Heart right ventricle (tissue), 16 donors: ENCODE measurements at regions of chr18 and their contacts with region 1.

Region 1: DNA sequence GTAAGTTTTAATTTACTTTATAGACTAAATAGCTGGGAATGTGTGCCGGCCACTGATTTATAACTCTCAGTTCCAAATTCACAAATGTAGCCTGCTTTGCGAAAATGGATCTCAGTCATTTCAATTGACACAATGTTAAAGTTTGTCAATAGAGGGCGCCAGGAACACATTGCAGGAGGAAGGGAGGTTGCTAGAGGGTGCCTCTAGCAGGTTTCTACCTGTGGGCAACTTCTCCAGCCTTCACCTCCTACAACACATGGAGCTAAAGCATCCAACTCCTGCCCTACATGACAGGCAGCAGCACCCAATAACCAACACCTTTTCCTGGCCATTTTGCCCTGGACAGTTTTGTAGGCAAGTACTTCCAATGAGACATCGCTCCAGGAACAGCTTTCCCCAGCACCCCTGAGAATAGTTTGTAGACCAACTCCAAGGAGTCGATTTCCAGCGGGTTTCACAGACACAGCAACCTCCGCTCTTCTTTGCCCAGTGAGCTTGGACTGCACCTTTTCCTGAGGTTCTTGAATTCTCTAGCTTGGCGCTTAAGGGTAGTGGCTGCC is 784.8 kb upstream of the CDH2 start:
- DNase-seq: peak in 1 of 2 donors; percentile 5
- ATAC-seq: no peak
- H3K4me3 ChIP-seq: no peak overlapping the region
- H3K27ac ChIP-seq: no peak overlapping the region
- H3K4me1 ChIP-seq: no peaks in the 10 kb centered on the region
- H3K27me3 ChIP-seq: no peaks in the 10 kb centered on the region
- CTCF ChIP-seq: peak; percentile 12 to 63 (median 49)

Region 2: GRCh38 chr18:28422577-28422976 is 539.2 kb before region 1 on chr18:
- intact Hi-C with region 1: no loop called
- DNase-seq: no peak
- ATAC-seq: no peak
- H3K4me3 ChIP-seq: no peak overlapping the region
- H3K27ac ChIP-seq: no peak overlapping the region
- H3K4me1 ChIP-seq: no peaks in the 10 kb centered on the region
- H3K27me3 ChIP-seq: no peaks in the 10 kb centered on the region
- CTCF ChIP-seq: no peak

Region 3: GRCh38 chr18:30271716-30272115 is 1310.0 kb after region 1 on chr18:
- intact Hi-C with region 1: loop called in 1 of 10 experiments (anchors 10 kb)
- DNase-seq: no peak
- ATAC-seq: no peak
- H3K4me3 ChIP-seq: no peak overlapping the region
- H3K27ac ChIP-seq: no peak overlapping the region
- H3K4me1 ChIP-seq: no peaks in the 10 kb centered on the region
- H3K27me3 ChIP-seq: no peaks in the 10 kb centered on the region
- CTCF ChIP-seq: no peak